ENCODE measurements at regions of chr2 and their contacts with region 1.

Region 1: DNA sequence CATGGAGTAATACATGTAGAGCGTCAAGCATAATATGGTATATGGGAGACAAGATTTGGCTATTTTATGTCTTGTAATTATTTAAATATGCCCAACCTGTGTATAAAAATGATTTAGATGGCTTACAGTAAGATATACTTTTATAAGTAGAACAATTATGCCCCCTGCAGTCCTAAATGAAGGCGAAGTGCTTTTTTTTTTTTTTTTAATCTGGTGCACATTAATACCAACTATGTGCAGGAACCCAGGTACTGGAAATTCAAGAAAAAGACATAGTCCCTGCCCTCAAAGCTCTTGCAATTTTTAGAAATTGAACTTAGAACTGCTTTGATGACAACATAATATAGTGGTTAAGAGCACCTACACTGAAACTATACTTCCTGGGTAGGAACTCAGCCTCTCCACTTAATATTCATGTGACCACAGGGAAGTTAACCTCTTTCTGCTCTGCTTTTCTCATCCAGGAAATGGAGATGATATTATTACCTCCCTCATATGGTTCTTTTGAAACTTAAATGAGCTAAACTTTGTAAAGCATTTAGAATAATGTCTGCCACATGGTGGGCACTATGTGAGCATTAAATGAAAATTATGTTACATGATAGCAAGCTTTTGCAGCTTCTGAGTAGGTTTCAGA is 38.1 kb downstream of the AFTPH start:
- DNase-seq: peak; percentile 73
- H3K4me3 ChIP-seq: no peak overlapping the region
- H3K27ac ChIP-seq: no peak overlapping the region
- H3K4me1 ChIP-seq: peaks cover 13% of the 10 kb centered on the region
- H3K27me3 ChIP-seq: no peaks in the 10 kb centered on the region
- CTCF ChIP-seq: peak; percentile 57

Region 2: GRCh38 chr2:64523666-64524603 is 38.3 kb before region 1 on chr2 and contains the start of gene AFTPH:
- CTCF ChIA-PET with region 1: interaction called, 3 read pairs
- POLR2A ChIA-PET with region 1: no interaction called
- intact Hi-C with region 1: loop called (anchors 2 kb)
- DNase-seq: peak; percentile 99
- H3K4me3 ChIP-seq: peak within 1 kb of the TSS; percentile 94
- H3K27ac ChIP-seq: peak within 1 kb of the TSS; percentile 84
- H3K4me1 ChIP-seq: peaks cover 16% of the 10 kb centered on the region
- H3K27me3 ChIP-seq: no peaks in the 10 kb centered on the region
- CTCF ChIP-seq: 0 out of 2 replicates have a peak, but pooled peaks have one; percentile 7
- total RNA-seq, gene AFTPH: 18.8 and 19.5 TPM in 2 replicates

Measured in A673 (cell line).